Activated T-helper 2 cell treated with anti-CD3 and anti-CD28 coated beads, Interferon-gamma antibody, Interleukin-2, Interleukin-4, amounts not matched to agents 10 μg/mL and 5 μg/mL and 100 μg/mL, durations not matched to agents 14 hours and 24 hours and 36 hours (primary cell): ENCODE measurements at regions of chr1 and their contacts with region 1.

Region 1: GRCh38 chr1:212234431-212235395 is 50.5 kb upstream of the PPP2R5A start:
- DNase-seq: no peak
- H3K4me3 Mint-ChIP-seq: peak overlapping the region; percentile 22
- H3K27ac Mint-ChIP-seq: peak overlapping the region; percentile 69
- H3K4me1 Mint-ChIP-seq: peaks cover 49% of the 10 kb centered on the region
- H3K27me3 Mint-ChIP-seq: no peaks in the 10 kb centered on the region

Region 2: GRCh38 chr1:212162635-212163034 is 72.1 kb before region 1 on chr1:
- intact Hi-C with region 1: loop called (anchors 5 kb)
- DNase-seq: peak; percentile 17
- H3K4me3 Mint-ChIP-seq: no peak overlapping the region
- H3K27ac Mint-ChIP-seq: peak overlapping the region; percentile 7
- H3K4me1 Mint-ChIP-seq: peaks cover 27% of the 10 kb centered on the region
- H3K27me3 Mint-ChIP-seq: no peaks in the 10 kb centered on the region

Region 3: DNA sequence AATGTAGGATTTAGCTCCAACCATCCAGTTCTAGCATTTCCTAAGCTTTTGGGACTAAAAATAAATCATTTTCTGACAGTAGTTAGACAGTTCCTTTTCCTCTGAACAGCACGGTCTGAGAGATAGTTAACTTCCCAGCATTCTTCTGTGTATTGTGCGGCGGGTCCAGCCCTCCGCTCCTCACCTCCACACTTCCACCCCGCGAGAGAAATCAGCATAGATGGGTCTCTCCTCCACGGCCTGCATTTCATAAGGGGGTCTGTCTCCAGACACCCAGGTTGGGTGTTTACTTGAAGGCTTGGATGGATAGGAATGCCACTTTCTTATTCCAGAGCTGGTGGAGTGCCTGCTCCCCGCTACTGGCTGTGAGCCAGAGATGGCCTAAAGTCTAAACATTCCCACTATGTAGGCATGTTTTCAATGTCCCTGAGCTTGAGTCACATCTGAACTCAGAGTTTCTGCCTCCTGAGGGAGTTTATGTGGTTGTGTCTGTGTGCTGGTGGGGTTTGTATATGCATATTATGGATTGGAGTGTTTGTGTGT is 12.5 kb after region 1 on chr1:
- intact Hi-C with region 1: no loop called
- DNase-seq: no peak
- H3K4me3 Mint-ChIP-seq: no peak overlapping the region
- H3K27ac Mint-ChIP-seq: no peak overlapping the region
- H3K4me1 Mint-ChIP-seq: peaks cover 16% of the 10 kb centered on the region
- H3K27me3 Mint-ChIP-seq: no peaks in the 10 kb centered on the region

Region 4: DNA sequence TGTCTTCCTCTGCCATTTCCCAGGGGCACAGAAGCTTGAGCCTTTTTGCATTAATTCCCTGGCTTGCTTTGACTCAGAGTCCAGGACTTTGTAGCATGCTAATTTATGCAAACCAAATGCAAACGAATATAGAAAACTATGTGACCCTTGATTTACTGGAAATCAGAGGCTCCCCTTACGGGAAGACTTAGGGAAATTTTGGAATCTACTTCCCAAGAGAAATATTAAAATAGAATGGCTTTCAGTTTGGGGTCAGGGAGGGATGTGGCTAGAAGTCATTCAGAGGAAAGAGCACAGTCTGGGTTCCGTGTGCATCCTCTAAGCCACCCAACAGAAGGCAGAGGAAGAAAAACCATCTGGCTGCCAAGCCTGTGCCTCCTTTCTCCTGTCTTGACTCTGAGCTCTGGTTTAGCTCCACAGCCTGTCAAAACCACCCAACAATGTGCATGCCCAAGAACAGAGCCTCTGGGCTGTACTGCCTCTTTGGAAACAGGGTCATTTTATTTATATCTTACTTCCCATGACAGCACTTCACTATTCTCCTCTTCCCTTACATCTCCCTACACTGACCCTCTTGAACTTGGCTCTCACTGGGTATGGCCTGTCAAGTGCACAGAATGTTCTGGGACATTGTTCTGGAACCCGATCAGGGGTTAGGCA is 403.9 kb after region 1 on chr1:
- intact Hi-C with region 1: no loop called
- DNase-seq: no peak
- H3K4me3 Mint-ChIP-seq: no peak overlapping the region
- H3K27ac Mint-ChIP-seq: no peak overlapping the region
- H3K4me1 Mint-ChIP-seq: peaks cover 33% of the 10 kb centered on the region
- H3K27me3 Mint-ChIP-seq: peaks cover 21% of the 10 kb centered on the region